ENCODE measurements at regions of chr1 and their contacts with region 1.

Region 1: GRCh38 chr1:157992031-157992832 is 1.2 kb upstream of the KIRREL1 start:
- DNase-seq: peak; percentile 55
- H3K4me3 ChIP-seq: no peak overlapping the region
- H3K27ac ChIP-seq: no peak overlapping the region
- H3K4me1 ChIP-seq: peaks cover 16% of the 10 kb centered on the region
- H3K27me3 ChIP-seq: no peaks in the 10 kb centered on the region
- CTCF ChIP-seq: peak; percentile 99

Region 2: GRCh38 chr1:157870490-157870889 is 121.7 kb before region 1 on chr1:
- CTCF ChIA-PET with region 1: no interaction called
- dilution Hi-C with region 1: no loop called
- in situ Hi-C with region 1: no loop called
- intact Hi-C with region 1: no loop called
- DNase-seq: no peak
- H3K4me3 ChIP-seq: no peak overlapping the region
- H3K27ac ChIP-seq: no peak overlapping the region
- H3K4me1 ChIP-seq: no peaks in the 10 kb centered on the region
- H3K27me3 ChIP-seq: no peaks in the 10 kb centered on the region
- CTCF ChIP-seq: no peak

Region 3: GRCh38 chr1:157948312-157949073 is 43.7 kb before region 1 on chr1:
- CTCF ChIA-PET with region 1: no interaction called
- dilution Hi-C with region 1: no loop called
- in situ Hi-C with region 1: no loop called
- intact Hi-C with region 1: no loop called
- DNase-seq: peak; percentile 35
- H3K4me3 ChIP-seq: no peak overlapping the region
- H3K27ac ChIP-seq: no peak overlapping the region
- H3K4me1 ChIP-seq: no peaks in the 10 kb centered on the region
- H3K27me3 ChIP-seq: no peaks in the 10 kb centered on the region
- CTCF ChIP-seq: peak; percentile 77 to 87

Region 4: DNA sequence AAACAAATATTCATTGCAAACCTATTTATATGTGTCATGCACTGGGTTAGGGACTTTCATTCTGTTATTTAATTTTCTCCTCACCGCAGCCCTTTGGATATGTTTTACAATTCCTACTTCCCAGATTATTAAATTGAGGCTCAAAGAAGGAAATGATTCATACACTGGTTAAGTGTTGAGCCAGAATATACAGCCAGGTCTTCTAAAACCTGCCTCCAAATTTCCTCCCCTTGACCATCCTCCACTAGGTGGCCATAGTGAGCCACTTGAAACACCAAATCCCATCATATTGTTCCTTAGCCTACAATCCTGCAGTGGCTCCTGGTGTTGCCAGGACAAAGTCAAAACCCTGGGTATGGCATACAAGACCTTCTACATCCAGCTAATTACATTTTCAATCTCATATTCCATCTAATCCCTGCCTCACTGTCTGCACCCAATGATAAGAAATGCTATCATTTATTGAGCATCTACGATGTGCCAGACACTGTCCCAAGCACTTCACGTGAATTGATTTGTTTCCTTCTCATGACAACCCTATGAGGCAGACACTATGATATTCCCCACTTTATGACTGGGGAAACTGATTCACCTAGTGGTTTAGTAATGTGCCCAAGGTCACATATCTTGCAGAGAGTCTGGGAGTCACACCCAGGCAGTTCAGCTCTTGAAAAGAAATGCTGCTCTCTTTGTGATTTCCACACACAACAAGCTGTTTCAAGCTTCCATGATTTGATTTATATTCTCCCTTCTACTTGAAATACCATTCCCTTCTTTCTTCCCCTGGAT is 22.3 kb before region 1 on chr1:
- CTCF ChIA-PET with region 1: interaction called, 3 read pairs
- dilution Hi-C with region 1: no loop called
- in situ Hi-C with region 1: no loop called
- intact Hi-C with region 1: loop called (anchors 1 kb)
- DNase-seq: peak; percentile 90
- H3K4me3 ChIP-seq: no peak overlapping the region
- H3K27ac ChIP-seq: peak overlapping the region; percentile 62
- H3K4me1 ChIP-seq: peaks cover 29% of the 10 kb centered on the region
- H3K27me3 ChIP-seq: no peaks in the 10 kb centered on the region
- CTCF ChIP-seq: peak; percentile 86 to 90

Region 5: DNA sequence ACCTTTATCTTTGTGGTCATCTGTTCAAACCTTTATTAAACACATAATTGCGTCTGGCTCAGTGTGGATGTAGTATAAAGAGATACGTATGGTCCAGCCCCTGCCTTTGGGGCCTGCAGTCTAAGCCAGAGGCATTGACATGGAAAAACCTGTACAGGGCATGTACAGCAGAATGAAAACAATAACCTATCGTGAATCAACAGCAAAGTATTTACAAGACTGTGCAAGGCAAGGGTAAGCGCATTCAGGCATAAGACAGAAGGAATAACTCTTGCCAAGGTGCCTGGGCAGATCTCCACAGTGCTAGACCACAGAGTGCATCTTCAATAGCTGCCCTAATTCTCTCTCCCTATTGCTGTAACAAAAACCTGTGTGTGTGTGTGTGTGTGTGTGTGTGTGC is 36.7 kb after region 1 on chr1:
- CTCF ChIA-PET with region 1: no interaction called
- dilution Hi-C with region 1: no loop called
- in situ Hi-C with region 1: loop called (anchors 5 kb)
- intact Hi-C with region 1: loop called (anchors 2 kb)
- DNase-seq: peak; percentile 96
- H3K4me3 ChIP-seq: no peak overlapping the region
- H3K27ac ChIP-seq: no peak overlapping the region
- H3K4me1 ChIP-seq: peaks cover 37% of the 10 kb centered on the region
- H3K27me3 ChIP-seq: no peaks in the 10 kb centered on the region
- CTCF ChIP-seq: no peak

Region 6: DNA sequence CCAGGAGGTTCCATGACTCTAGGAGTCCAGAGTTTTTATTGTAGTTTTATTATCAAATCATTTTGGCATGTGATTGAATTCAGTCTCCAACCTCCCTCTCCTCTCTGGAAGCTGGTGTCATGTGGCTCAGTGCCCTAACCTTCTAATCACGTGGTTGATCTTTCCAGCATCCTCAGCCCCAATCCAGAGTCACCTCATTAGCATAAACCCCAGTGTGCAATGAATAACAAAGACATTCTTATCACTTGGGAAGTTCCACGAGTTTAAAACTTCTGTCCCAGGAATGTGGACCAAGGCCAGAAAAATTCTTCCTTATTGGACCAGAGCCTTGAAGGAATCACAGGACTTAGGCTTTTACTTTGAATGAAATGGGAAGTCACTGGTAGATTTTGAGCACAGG is 53.4 kb after region 1 on chr1:
- CTCF ChIA-PET with region 1: no interaction called
- dilution Hi-C with region 1: no loop called
- in situ Hi-C with region 1: no loop called
- intact Hi-C with region 1: no loop called
- DNase-seq: no peak
- H3K4me3 ChIP-seq: no peak overlapping the region
- H3K27ac ChIP-seq: no peak overlapping the region
- H3K4me1 ChIP-seq: peaks cover 4% of the 10 kb centered on the region
- H3K27me3 ChIP-seq: no peaks in the 10 kb centered on the region
- CTCF ChIP-seq: no peak

Region 7: DNA sequence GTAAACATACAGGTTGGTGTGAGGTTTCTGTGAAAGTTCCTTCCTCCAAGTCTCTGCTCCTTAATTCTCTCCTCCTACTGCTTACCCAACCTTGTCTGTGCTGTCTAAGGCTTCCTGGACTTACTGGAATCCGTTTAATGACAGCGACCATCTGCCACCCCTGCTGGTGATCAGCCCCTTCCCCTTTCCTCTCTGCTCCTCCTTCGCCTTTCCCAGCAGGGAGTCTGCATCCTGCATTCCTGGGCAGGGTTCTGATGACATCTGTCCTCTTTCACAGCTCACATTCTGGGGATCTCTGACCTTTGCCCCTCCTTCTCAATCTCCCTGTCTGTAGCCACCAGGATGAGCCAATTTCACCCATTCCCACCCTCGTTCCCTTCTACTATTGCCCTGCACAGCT is 67.8 kb after region 1 on chr1:
- CTCF ChIA-PET with region 1: no interaction called
- dilution Hi-C with region 1: loop called (anchors 5 kb)
- in situ Hi-C with region 1: no loop called
- intact Hi-C with region 1: no loop called
- DNase-seq: no peak
- H3K4me3 ChIP-seq: no peak overlapping the region
- H3K27ac ChIP-seq: no peak overlapping the region
- H3K4me1 ChIP-seq: no peaks in the 10 kb centered on the region
- H3K27me3 ChIP-seq: no peaks in the 10 kb centered on the region
- CTCF ChIP-seq: no peak

Region 8: DNA sequence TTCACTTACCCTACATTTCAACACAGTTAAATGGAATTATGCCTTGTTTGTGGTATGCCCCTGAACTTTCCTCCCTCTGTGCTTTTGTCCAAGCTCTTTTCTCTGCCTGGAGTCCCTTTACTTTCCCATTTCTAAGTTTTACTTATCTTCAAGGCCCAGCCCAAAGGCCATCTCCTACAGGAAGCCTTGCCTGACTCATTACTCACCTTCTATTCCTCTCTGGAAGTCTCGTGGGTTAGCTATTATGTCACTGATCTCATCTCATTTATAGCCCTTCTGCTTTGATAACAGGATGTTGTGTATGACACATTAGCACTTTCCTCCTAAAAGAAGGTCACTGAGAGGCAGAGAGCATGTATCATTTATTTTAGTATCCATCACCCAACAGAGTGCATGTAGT is 109.7 kb after region 1 on chr1:
- CTCF ChIA-PET with region 1: no interaction called
- dilution Hi-C with region 1: no loop called
- in situ Hi-C with region 1: loop called (anchors 10 kb)
- intact Hi-C with region 1: no loop called
- DNase-seq: peak; percentile 75
- H3K4me3 ChIP-seq: no peak overlapping the region
- H3K27ac ChIP-seq: no peak overlapping the region
- H3K4me1 ChIP-seq: peaks cover 14% of the 10 kb centered on the region
- H3K27me3 ChIP-seq: no peaks in the 10 kb centered on the region
- CTCF ChIP-seq: no peak

Measured in mammary epithelial cell (primary cell).